ENCODE measurements at regions of chr13 and their contacts with region 1.

Region 1: GRCh38 chr13:28636674-28637317 is 22.1 kb upstream of the POMP start:
- DNase-seq: peak; percentile 68
- ATAC-seq: peak; percentile 58
- H3K4me3 ChIP-seq: no peak overlapping the region
- H3K27ac ChIP-seq: no peak overlapping the region
- H3K4me1 ChIP-seq: peaks cover 22% of the 10 kb centered on the region
- H3K27me3 ChIP-seq: no peaks in the 10 kb centered on the region
- CTCF ChIP-seq: peak; percentile 78 to 86 (median 86)
- EP300 ChIP-seq: peak in 1 of 2 experiments; percentile 45; a peak in 1 of 4 replicates
- POLR2A ChIP-seq: no peak
- RAD21 ChIP-seq: peak; percentile 93

Region 2: GRCh38 chr13:28014301-28014700 is 622.5 kb before region 1 on chr13:
- CTCF ChIA-PET with region 1: no interaction called
- POLR2A ChIA-PET with region 1: no interaction called
- RAD21 ChIA-PET with region 1: no interaction called
- SMC1A ChIA-PET with region 1: no interaction called
- in situ Hi-C with region 1: no loop called
- intact Hi-C with region 1: no loop called
- DNase-seq: no peak
- ATAC-seq: no peak
- H3K4me3 ChIP-seq: no peak overlapping the region
- H3K27ac ChIP-seq: no peak overlapping the region
- H3K4me1 ChIP-seq: peaks cover 10% of the 10 kb centered on the region
- H3K27me3 ChIP-seq: no peaks in the 10 kb centered on the region
- CTCF ChIP-seq: no peak
- EP300 ChIP-seq: no peak
- POLR2A ChIP-seq: no peak
- RAD21 ChIP-seq: no peak

Region 3: DNA sequence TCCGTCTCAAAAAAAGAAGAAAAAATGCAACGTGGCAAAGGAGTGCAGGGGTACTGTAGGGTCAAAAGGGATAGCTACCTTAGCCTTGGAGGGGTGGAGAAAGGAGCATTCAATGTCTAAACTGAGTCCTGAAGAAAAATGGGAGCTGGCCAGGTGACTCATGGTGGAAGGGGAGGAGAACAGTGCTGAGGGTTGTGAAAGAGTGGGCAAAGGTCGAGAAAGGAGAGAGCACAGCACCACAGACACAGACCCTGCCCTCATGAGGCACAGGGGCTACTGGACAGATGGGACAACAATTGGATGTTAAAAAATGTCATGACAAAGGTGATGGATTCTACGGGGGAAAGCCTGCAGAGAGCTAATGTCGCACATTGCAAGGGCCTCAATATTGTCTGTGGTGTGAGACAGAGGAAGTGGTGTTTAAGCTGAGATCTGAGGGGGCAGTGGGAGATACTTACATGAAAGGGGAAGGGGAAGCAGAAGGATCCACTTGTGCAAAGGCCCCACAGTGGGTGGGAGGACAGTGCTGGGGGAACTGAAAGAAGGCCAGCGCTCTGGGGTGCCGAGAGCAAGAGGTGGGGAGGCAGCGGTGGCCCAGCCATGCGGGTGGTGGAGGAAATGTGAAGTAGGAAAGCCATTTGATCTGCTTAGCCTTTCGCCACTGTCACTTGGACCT is 605.4 kb before region 1 on chr13:
- CTCF ChIA-PET with region 1: interaction called, 4 read pairs
- POLR2A ChIA-PET with region 1: no interaction called
- RAD21 ChIA-PET with region 1: interaction called, 4 read pairs
- SMC1A ChIA-PET with region 1: interaction called, 3 read pairs
- in situ Hi-C with region 1: no loop called
- intact Hi-C with region 1: loop called (anchors 10 kb)
- DNase-seq: no peak
- ATAC-seq: peak; percentile 69
- H3K4me3 ChIP-seq: no peak overlapping the region
- H3K27ac ChIP-seq: peak overlapping the region; percentile 36; the same call in 1 of the 2 replicates
- H3K4me1 ChIP-seq: peaks cover 52% of the 10 kb centered on the region
- H3K27me3 ChIP-seq: no peaks in the 10 kb centered on the region
- CTCF ChIP-seq: no peak
- EP300 ChIP-seq: peak in 1 of 2 experiments; percentile 46; a peak in 1 of 4 replicates
- POLR2A ChIP-seq: no peak
- RAD21 ChIP-seq: 0 out of 2 replicates have a peak, but pooled peaks have one; percentile 1

Region 4: DNA sequence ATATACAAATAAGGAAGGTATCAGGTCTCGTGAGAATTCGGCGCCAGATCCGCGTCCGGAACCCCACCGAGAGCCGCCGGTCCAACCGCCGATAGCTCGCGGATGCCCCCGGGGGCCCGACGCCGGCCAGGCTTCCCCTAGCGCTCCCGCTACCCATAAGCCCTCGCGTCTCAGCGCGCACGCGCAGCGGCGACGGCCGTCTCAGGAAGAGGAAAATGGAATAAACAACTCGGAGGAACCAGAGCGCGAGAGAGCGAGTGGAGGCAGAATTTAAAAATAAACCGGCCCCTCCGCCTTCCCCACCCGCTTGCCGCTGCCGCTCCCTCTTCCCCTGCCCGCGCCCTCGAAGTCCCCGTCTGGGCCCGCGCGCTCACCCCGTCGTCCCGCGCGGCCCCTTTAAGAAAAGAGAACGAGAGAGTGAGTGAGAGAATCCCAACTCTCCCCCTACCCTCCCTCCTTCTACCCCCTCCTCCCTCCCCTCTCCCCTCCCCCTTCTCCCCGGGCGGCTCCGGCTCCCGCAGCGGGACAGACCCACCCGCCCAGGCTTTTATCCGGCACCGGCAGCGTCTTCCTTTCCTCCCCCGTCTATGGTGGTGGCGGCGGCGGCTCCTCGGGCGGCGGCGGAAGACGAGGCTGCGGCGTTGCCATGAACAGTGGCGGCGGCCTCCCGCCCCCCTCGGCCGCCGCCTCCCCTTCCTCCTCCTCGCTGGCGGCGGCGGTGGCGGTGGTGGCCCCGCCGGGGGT is 498.6 kb before region 1 on chr13 and contains the start of gene PAN3:
- CTCF ChIA-PET with region 1: no interaction called
- POLR2A ChIA-PET with region 1: no interaction called
- RAD21 ChIA-PET with region 1: no interaction called
- SMC1A ChIA-PET with region 1: interaction called, 3 read pairs
- in situ Hi-C with region 1: no loop called
- intact Hi-C with region 1: loop called (anchors 5 kb)
- DNase-seq: peak; percentile 56
- ATAC-seq: peak; percentile 67
- H3K4me3 ChIP-seq: peak within 1 kb of the TSS; percentile 93
- H3K27ac ChIP-seq: peak within 1 kb of the TSS; percentile 96
- H3K4me1 ChIP-seq: peaks cover 8% of the 10 kb centered on the region
- H3K27me3 ChIP-seq: no peaks in the 10 kb centered on the region
- CTCF ChIP-seq: peak in 2 of 3 experiments; percentile 14 to 32; a peak in 2 of 6 replicates
- EP300 ChIP-seq: no peak
- POLR2A ChIP-seq: peak; percentile 84
- RAD21 ChIP-seq: peak; percentile 29; the same call in 1 of the 2 replicates
- polyA plus RNA-seq, gene PAN3: 13.0 to 19.4 TPM

Region 5: GRCh38 chr13:28401303-28402056 is 235.3 kb before region 1 on chr13:
- CTCF ChIA-PET with region 1: interaction called, 5 read pairs
- POLR2A ChIA-PET with region 1: no interaction called
- RAD21 ChIA-PET with region 1: interaction called, 3 read pairs
- SMC1A ChIA-PET with region 1: interaction called, 27 read pairs
- in situ Hi-C with region 1: no loop called
- intact Hi-C with region 1: loop called (anchors 2 kb)
- DNase-seq: peak; percentile 62
- ATAC-seq: peak; percentile 80
- H3K4me3 ChIP-seq: no peak overlapping the region
- H3K27ac ChIP-seq: peak overlapping the region; percentile 59
- H3K4me1 ChIP-seq: peaks cover 9% of the 10 kb centered on the region
- H3K27me3 ChIP-seq: no peaks in the 10 kb centered on the region
- CTCF ChIP-seq: peak in 2 of 3 experiments; percentile 13 to 20; a peak in 2 of 6 replicates
- EP300 ChIP-seq: no peak
- POLR2A ChIP-seq: no peak
- RAD21 ChIP-seq: peak; percentile 52; the same call in 1 of the 2 replicates

Region 6: DNA sequence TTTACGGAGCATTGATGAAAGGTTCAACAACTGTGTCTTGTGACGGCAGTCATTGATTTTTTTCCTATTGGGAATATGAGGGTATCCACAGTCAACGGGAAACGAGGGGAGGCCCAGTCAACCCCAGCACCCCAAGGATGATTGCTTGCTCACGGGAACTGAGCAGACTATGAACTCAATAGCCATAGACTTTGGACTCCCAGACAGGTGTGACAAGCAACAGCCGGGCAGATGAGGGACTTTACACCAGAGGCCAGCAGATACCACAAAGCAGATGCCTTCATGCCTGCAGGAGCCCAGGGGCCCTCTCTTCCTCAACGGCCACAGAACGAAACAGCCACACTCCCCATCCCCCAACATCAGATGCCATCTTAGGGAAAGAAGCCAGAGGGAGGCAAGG is 61.6 kb before region 1 on chr13:
- CTCF ChIA-PET with region 1: interaction called, 14 read pairs
- POLR2A ChIA-PET with region 1: interaction called, 5 read pairs
- RAD21 ChIA-PET with region 1: interaction called, 4 read pairs
- SMC1A ChIA-PET with region 1: interaction called, 6 read pairs
- in situ Hi-C with region 1: no loop called
- intact Hi-C with region 1: no loop called
- DNase-seq: peak; percentile 26
- ATAC-seq: peak; percentile 92
- H3K4me3 ChIP-seq: no peak overlapping the region
- H3K27ac ChIP-seq: no peak overlapping the region
- H3K4me1 ChIP-seq: peaks cover 8% of the 10 kb centered on the region; the same call in 1 of the 2 replicates
- H3K27me3 ChIP-seq: no peaks in the 10 kb centered on the region
- CTCF ChIP-seq: peak in 1 of 3 experiments; percentile 28; a peak in 2 of 6 replicates
- EP300 ChIP-seq: peak; percentile 32 to 49; a peak in 1 of 4 replicates
- POLR2A ChIP-seq: no peak
- RAD21 ChIP-seq: 0 out of 2 replicates have a peak, but pooled peaks have one; percentile 9

Region 7: DNA sequence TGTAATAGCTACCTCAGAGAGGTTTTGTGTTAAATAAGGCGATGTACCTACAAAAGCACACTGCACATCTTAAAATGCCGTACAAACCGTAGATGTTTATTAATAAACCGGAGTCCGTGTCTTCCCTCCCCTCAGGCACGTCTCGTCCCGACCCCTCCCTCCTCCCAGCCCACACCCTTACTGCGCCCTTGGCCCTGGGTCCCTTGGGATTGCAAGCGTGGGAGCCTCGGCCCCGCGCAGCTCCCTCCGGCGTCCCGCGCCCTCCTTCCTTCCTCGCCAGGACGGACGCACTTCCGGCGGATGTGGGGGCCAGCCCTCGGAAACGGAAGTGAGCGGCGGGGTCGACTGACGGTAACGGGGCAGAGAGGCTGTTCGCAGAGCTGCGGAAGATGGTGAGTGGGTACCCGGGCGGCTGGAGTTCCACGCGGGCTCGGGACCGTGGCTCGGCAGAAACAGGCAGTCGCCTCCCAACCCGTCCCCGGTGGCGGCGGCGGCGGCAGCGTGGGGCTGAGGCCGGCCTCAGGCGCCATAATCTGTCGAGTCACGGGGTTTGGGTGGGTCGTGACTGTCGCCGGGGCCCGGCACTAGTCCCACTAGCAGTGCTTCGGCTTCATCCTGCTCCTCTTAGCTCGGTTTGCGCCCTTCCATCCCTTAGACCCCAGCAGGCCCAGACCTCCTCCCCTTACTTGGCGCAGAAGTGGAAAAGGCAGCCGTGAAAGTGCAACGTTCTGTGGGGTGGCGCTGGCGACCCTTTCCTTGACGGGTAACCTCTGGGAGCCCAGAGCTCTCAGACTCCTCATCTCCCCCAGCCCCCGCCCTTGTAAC is 22.2 kb after region 1 on chr13 and contains the start of gene POMP:
- CTCF ChIA-PET with region 1: interaction called, 139 read pairs
- POLR2A ChIA-PET with region 1: interaction called, 84 read pairs
- RAD21 ChIA-PET with region 1: interaction called, 196 read pairs
- SMC1A ChIA-PET with region 1: interaction called, 270 read pairs
- in situ Hi-C with region 1: no loop called
- intact Hi-C with region 1: loop called (anchors 1 kb)
- DNase-seq: peak; percentile 82
- ATAC-seq: peak; percentile 85
- H3K4me3 ChIP-seq: peak within 1 kb of the TSS; percentile 80
- H3K27ac ChIP-seq: peak within 1 kb of the TSS; percentile 99
- H3K4me1 ChIP-seq: 0 out of 2 replicates have a peak, but pooled peaks cover 4% of the 10 kb centered on the region
- H3K27me3 ChIP-seq: no peaks in the 10 kb centered on the region
- CTCF ChIP-seq: no peak
- EP300 ChIP-seq: peak in 1 of 2 experiments; percentile 63; a peak in 2 of 4 replicates
- POLR2A ChIP-seq: peak; percentile 99
- RAD21 ChIP-seq: 0 out of 2 replicates have a peak, but pooled peaks have one; percentile 4
- polyA plus RNA-seq, gene POMP: 655 to 668 TPM

Measured in GM12878 (cell line).